ENCODE measurements at regions of chr15 and their contacts with region 1.

Region 1: GRCh38 chr15:64589415-64590084 is 129.2 kb downstream of the ZNF609 start:
- DNase-seq: no peak
- ATAC-seq: no peak
- H3K4me3 ChIP-seq: no peak overlapping the region
- H3K27ac ChIP-seq: no peak overlapping the region
- H3K4me1 ChIP-seq: peaks cover 6% of the 10 kb centered on the region; the same call in 1 of the 2 replicates
- H3K27me3 ChIP-seq: no peaks in the 10 kb centered on the region
- CTCF ChIP-seq: no peak

Region 2: GRCh38 chr15:64574301-64575017 is 15.1 kb before region 1 on chr15:
- CTCF ChIA-PET with region 1: no interaction called
- POLR2A ChIA-PET with region 1: interaction called, 11 read pairs
- in situ Hi-C with region 1: no loop called
- intact Hi-C with region 1: no loop called
- DNase-seq: no peak
- ATAC-seq: no peak
- H3K4me3 ChIP-seq: no peak overlapping the region
- H3K27ac ChIP-seq: no peak overlapping the region
- H3K4me1 ChIP-seq: no peaks in the 10 kb centered on the region
- H3K27me3 ChIP-seq: no peaks in the 10 kb centered on the region
- CTCF ChIP-seq: no peak

Region 3: DNA sequence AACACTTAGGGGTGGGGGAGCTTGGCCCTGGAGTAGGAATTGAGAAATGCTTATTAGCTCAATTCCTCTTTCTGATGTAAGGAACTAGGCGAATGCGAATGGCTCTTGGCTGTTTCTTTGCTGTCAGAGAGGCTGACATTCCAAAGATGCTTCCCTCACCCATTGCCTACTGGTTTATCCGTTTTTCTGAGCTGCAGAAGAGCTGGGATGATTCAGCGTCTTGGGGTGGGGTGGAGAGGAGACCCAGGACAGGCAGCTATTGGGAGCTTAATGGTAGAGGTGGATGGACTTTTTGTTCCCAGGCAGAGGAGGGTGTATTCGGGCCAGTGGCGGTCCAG is 261.9 kb after region 1 on chr15:
- CTCF ChIA-PET with region 1: no interaction called
- POLR2A ChIA-PET with region 1: no interaction called
- in situ Hi-C with region 1: no loop called
- intact Hi-C with region 1: no loop called
- DNase-seq: no peak
- ATAC-seq: no peak
- H3K4me3 ChIP-seq: no peak overlapping the region
- H3K27ac ChIP-seq: no peak overlapping the region
- H3K4me1 ChIP-seq: peaks cover 2% of the 10 kb centered on the region; the same call in 1 of the 2 replicates
- H3K27me3 ChIP-seq: no peaks in the 10 kb centered on the region
- CTCF ChIP-seq: no peak

Measured in Panc1 (cell line).